HCT116 (cell line): ENCODE measurements at regions of chr20 and their contacts with region 1.

Region 1: DNA sequence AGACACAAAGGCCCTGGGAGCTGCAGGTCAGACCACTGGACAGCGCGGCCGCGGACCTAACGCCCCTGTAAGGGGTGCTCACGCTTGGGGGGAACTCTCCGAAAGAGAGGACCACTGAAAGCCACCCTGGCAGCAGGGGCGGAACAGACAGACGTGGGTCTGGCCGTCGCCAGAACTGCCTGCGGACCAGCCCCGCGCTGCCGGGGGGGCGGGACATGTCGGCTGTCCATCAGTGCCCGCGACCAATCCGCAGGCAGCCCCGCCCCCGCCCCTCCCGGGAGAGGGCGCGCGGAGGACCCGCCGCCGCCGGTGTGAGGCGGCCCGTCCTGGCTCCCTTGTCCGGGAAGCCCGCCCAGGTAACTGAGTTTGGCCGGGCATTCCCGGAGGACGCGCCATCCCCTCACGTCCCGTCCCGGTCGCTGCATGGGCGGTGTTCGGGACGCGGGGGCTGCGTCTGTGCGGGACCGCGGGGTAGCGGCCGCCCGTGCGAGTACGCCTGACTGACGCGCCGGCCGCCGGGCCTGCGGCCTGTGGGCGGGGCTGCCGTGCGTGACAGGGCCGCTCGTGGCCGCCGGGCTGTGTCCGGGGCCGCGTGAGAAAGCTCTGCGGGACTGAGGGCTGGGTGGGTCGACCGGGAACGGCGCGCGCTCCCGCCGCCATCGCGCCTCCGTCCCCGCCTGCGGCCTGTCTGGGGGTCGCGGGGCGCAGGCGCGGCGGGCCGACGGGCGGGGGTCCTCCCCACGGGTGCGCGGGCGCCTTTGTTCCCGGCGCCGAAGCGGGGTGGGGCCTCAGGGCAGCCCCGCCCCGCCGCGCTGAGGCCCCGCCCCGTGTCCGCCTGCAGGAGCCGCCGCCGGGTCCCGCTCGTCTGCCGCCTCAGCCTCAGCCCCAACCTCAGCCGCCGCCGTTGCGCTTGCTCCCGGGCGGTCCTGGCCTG is at the start of gene PLCG1:
- DNase-seq: peak; percentile 35
- ATAC-seq: peak; percentile 84
- H3K4me3 ChIP-seq: peak within 1 kb of the TSS; percentile 57 to 79
- H3K27ac ChIP-seq: peak within 1 kb of the TSS; percentile 85
- H3K4me1 ChIP-seq: peaks cover 9 to 20% of the 10 kb centered on the region in 2 experiments; a peak in 3 of 4 replicates
- H3K27me3 ChIP-seq: no peaks in the 10 kb centered on the region
- CTCF ChIP-seq: no peak
- POLR2A ChIP-seq: peak; percentile 21
- RAD21 ChIP-seq: no peak
- total RNA-seq, gene PLCG1: 45.6 TPM

Region 2: GRCh38 chr20:41119546-41120235 is 17.3 kb before region 1 on chr20:
- CTCF ChIA-PET with region 1: interaction called, 11 read pairs
- POLR2A ChIA-PET with region 1: no interaction called
- RAD21 ChIA-PET with region 1: no interaction called
- intact Hi-C with region 1: no loop called
- DNase-seq: no peak
- ATAC-seq: no peak
- H3K4me3 ChIP-seq: no peak overlapping the region
- H3K27ac ChIP-seq: no peak overlapping the region
- H3K4me1 ChIP-seq: no peaks in the 10 kb centered on the region
- H3K27me3 ChIP-seq: no peaks in the 10 kb centered on the region
- CTCF ChIP-seq: no peak
- POLR2A ChIP-seq: no peak
- RAD21 ChIP-seq: no peak

Region 3: DNA sequence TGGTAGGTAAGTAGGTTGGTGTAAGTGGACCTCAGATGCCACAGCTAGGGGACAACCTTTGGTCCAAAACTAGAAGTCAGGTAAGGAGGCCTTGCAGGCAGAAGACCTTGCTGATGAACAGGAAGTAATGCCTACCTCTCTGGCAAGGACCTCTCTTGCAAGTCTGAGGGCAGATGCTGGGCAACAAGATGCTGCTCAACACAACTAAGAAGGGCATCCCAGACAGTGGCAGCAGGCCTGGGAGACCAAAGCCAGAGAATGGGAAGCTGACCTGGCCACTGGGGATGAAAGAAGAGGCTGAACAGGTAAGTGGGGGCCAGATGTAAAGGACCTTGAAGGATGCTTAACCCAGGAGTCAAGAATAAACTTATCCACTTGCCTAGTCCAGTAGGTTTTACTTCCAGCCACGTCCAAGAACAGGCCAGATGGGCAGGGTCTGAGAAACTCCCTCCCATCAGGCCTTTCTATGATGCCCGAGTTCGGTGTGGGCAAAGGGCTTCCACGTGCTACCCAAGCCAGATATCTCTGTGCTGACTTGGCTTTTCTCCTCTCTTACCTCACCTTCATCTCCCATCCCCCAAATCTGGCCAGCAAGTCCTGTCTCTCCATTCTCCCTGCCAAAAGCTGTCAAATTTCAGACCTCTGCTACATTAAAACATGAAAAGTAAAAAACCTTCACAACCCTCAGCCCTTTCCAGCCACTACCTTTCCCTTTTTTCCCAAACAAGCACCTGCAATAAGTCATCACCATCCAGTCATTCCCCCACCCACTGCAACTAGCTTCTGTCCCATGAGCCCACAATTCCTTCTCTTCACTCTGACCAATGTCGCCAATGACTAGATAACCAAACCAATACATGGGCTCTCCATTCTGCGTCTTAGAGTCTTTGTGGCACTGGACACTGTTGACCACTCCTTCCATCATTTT is 11.2 kb before region 1 on chr20:
- CTCF ChIA-PET with region 1: interaction called, 10 read pairs
- POLR2A ChIA-PET with region 1: no interaction called
- RAD21 ChIA-PET with region 1: no interaction called
- intact Hi-C with region 1: no loop called
- DNase-seq: no peak
- ATAC-seq: no peak
- H3K4me3 ChIP-seq: no peak overlapping the region
- H3K27ac ChIP-seq: no peak overlapping the region
- H3K4me1 ChIP-seq: no peaks in the 10 kb centered on the region
- H3K27me3 ChIP-seq: no peaks in the 10 kb centered on the region
- CTCF ChIP-seq: no peak
- POLR2A ChIP-seq: no peak
- RAD21 ChIP-seq: no peak

Region 4: DNA sequence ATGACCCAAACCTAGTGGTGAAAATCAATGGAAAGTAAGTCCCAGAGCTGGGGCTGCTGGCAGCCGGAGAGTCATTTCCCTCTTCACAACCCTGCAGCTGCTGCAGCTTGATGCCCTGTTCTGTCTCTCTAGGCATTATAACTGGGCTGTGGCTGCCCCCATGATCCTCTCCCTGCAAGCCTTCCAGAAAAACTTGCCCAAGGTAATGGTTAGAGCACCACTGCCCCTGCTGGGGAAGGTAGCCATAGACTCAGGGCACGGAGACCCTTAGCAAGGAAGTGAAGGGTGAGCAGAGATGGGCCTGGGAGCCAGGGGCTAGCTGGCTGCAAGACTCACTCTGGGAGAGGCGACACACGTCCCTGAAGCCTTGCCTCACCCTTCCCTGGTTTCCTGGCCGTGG is 215.7 kb after region 1 on chr20:
- CTCF ChIA-PET with region 1: no interaction called
- POLR2A ChIA-PET with region 1: no interaction called
- RAD21 ChIA-PET with region 1: no interaction called
- intact Hi-C with region 1: no loop called
- DNase-seq: no peak
- ATAC-seq: peak; percentile 39; the same call in 1 of the 2 replicates
- H3K4me3 ChIP-seq: no peak overlapping the region
- H3K27ac ChIP-seq: no peak overlapping the region
- H3K4me1 ChIP-seq: no peaks in the 10 kb centered on the region
- H3K27me3 ChIP-seq: no peaks in the 10 kb centered on the region
- CTCF ChIP-seq: no peak
- POLR2A ChIP-seq: no peak
- RAD21 ChIP-seq: no peak